HEK293 (cell line): ENCODE measurements at regions of chr11 and their contacts with region 1.

Region 1: DNA sequence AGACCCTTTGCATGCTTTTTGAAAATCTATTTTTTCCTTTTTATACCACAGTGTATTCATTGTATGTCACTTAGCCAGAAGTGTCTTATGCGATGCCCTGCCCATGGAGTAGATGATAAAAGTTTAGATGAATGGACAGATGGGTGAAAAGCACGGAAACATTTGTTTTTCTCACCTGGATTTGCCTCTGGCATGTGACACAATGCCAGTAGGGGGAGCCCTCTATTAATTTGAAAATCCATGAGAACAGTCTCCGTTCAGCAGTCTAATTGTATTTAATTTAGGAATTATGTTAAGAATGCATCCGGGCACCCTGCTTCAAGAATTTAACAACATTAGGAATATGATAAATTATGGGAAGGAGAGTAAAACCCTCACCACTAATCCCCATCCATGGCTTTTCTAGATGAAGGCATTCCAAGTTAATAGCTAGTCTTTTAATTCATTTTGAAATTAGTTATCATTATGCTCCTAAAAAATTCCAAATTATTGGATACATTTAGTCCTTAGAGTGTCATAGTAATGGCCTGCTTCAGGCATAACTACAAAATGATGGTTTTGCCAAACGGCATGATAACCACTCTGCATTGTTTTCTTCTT is 55.3 kb upstream of the ALKBH3 start:
- H3K4me3 ChIP-seq: no peak overlapping the region
- H3K27ac ChIP-seq: no peak overlapping the region
- H3K4me1 ChIP-seq: no peaks in the 10 kb centered on the region
- CTCF ChIP-seq: no peak

Region 2: DNA sequence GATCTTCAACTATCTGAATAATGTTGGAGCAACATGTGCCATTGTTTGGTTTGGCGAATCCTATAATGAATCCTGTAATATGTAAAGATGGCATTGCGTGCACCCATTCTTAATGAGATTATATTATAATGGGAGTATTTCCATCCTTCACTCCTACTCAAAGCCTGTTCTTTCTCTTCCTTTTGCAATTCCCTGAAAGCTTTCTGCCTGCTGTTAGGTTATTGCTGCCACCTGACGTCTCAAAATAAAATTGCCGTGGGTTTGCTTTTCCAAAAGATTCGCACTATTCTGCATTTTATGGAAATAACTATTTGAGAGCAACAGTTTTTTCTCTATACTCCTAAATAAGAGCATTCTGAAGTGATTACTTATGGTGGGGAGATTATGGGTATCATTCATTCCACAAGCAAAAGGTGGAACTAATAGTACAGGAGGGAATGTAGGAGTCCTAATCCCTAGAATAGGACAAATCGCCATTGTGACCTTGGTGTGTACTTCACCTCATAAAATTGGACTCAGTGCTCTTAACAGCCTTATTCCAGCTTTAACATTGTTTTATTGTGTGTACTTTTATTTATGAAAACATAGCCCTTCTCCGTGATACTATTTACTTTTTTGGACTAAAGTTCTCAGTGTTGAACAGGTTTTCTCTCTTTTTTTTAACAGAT is 14.3 kb before region 1 on chr11:
- CTCF ChIA-PET with region 1: interaction called, 10 read pairs
- POLR2A ChIA-PET with region 1: no interaction called
- H3K4me3 ChIP-seq: no peak overlapping the region
- H3K27ac ChIP-seq: no peak overlapping the region
- H3K4me1 ChIP-seq: no peaks in the 10 kb centered on the region
- CTCF ChIP-seq: no peak

Region 3: DNA sequence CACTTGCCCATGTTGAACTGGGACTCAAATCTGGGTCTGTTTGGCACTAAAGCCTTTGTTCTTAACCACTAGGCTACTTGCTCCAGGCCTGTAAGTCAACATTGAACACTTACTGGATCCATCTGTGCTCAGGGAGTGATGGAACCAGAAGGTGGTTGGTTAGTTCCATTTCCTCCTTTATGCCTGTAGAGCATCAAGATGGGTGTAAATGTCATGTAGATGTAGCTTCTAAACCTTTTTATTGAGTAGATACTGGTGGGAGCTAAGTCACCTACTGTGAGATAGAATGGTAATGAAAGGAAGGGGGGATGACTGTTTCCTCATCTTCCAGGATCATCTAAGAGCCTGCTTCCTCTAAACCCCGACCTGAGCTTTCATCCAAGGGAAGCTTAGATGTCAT is 16.7 kb after region 1 on chr11:
- CTCF ChIA-PET with region 1: interaction called, 23 read pairs
- POLR2A ChIA-PET with region 1: no interaction called
- H3K4me3 ChIP-seq: no peak overlapping the region
- H3K27ac ChIP-seq: no peak overlapping the region
- H3K4me1 ChIP-seq: no peaks in the 10 kb centered on the region
- CTCF ChIP-seq: no peak

Region 4: DNA sequence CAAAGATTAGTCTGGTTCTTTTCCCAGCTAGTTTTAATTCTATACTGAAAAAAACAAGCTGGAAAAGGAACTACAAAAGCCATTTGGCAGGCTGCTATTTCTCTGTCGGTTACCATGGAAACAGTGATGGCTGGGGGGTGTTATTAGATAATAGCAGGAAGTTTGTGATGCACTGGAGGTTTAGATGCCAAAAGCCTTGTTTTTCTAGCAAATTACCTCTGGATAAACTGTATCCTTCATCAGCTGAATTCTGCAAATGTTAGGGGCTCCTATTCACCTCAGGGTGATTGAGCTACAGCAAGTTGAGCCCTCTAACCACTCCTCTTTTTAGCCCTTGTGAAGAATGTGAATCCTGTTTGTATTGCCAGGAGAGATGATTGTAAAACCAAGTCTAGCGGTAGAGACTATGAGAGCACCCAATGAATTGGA is 80.5 kb after region 1 on chr11:
- CTCF ChIA-PET with region 1: no interaction called
- POLR2A ChIA-PET with region 1: no interaction called
- H3K4me3 ChIP-seq: no peak overlapping the region
- H3K27ac ChIP-seq: no peak overlapping the region
- H3K4me1 ChIP-seq: no peaks in the 10 kb centered on the region
- CTCF ChIP-seq: no peak

Region 5: GRCh38 chr11:43944761-43945311 is 119.5 kb after region 1 on chr11:
- CTCF ChIA-PET with region 1: no interaction called
- POLR2A ChIA-PET with region 1: no interaction called
- H3K4me3 ChIP-seq: no peak overlapping the region
- H3K27ac ChIP-seq: no peak overlapping the region
- H3K4me1 ChIP-seq: no peaks in the 10 kb centered on the region
- CTCF ChIP-seq: peak; percentile 66

Region 6: GRCh38 chr11:43969543-43969942 is 144.2 kb after region 1 on chr11:
- CTCF ChIA-PET with region 1: no interaction called
- POLR2A ChIA-PET with region 1: no interaction called
- H3K4me3 ChIP-seq: no peak overlapping the region
- H3K27ac ChIP-seq: no peak overlapping the region
- H3K4me1 ChIP-seq: no peaks in the 10 kb centered on the region
- CTCF ChIP-seq: no peak